Activated naive CD4-positive, alpha-beta T cell treated with anti-CD3 and anti-CD28 coated beads for 36 hours (primary cell): ENCODE measurements at regions of chr6 and their contacts with region 1.

Region 1: GRCh38 chr6:30877419-30878371 is 6.6 kb upstream of the DDR1 start:
- DNase-seq: peak; percentile 89
- H3K4me3 Mint-ChIP-seq: peak overlapping the region; percentile 68
- H3K27ac Mint-ChIP-seq: peak overlapping the region; percentile 84
- H3K4me1 Mint-ChIP-seq: peaks cover 23% of the 10 kb centered on the region
- H3K27me3 Mint-ChIP-seq: no peaks in the 10 kb centered on the region

Region 2: DNA sequence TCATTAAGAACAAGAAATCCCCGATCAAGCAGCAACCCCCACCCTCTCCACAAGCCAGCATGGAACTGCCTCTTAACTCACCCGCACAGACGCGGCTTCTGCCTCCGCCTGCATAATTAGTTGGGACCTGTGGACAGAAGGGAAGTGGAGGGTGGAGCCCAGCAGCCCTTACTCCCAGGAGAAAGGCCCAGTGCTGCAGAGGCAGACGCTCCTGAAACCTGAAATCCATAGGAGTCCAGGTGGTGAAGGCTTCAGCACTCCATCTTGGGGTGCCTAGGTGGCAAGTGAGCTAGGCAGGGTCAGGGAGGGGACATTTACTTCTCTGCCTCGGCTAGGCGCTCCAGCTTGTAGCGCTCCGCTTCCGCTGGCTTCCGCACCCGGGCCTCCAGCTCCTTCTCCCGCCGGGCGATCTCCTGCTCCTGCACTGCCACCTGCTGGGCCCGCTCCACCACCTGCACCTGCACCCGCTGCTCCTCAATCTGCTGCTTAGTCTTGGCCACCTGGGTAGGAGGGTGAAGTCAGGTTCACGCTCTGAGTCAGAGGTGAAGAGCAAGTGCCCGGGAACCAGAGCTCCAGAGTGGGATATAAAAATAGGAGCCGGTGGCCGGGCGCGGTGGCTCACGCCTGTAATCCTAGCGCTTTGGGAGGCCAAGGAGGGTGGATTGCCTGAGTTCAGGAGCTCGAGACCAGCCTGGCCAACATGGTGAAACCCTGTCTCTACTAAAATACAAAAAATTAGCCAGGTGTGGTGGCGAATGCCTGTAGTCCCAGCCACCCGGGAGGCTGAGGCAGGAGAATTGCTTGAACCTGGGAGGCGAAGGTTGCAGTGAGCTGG is 146.9 kb before region 1 on chr6:
- CTCF ChIA-PET with region 1: interaction called, 9 read pairs
- intact Hi-C with region 1: loop called (anchors 1 kb)
- DNase-seq: peak; percentile 94
- H3K4me3 Mint-ChIP-seq: peak overlapping the region; percentile 29
- H3K27ac Mint-ChIP-seq: no peak overlapping the region
- H3K4me1 Mint-ChIP-seq: peaks cover 47% of the 10 kb centered on the region
- H3K27me3 Mint-ChIP-seq: no peaks in the 10 kb centered on the region